Ascending aorta (tissue), 2 donors: ENCODE measurements at regions of chr15 and their contacts with region 1.

Region 1: DNA sequence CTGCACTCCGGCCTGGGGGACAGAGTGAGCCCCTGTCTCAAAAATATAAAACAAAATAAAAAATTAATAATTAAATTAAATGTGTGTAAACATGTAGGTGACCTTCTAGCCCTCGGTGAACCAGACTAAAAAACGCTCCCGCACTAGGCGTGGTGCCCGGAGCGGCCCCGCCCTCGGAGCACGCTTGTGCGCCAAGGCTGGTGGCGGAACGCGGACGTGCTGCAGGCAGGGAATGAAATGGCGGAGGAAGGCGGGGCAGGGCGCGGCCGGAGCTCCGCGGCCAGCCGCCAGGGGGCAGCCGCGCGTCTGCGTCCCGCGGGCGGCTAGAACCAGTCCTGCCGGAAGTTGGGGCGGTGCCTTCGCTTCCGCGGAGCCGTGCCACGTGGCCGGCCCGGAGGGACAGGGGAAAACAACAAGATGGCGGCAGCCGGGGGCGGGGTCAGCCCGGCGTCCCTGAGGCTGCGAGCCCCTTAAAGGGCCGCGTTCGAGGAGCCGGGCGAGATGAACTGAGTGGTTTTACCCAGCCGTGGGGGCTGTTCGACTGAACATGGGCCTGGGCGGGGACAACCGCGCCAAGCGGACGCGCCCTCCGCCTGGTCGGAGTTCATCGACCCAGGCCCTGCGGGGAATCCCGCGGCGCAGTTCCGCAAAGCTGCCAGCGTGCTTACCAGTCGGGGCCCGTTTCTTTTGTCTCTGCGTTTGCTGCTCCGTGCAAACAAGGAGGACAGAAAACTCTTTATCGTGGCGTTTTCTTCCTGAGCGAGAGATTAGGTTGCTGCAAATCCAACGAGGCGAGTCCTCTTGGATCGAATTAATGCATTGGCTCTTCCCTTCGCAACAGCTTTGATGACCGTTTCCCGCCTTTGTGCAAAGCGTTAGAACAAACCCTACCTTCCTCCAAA is 90.9 kb upstream of the CHD2 start:
- DNase-seq: peak; percentile 94 to 99
- H3K4me3 ChIP-seq: peak overlapping the region; percentile 69 to 72
- H3K27ac ChIP-seq: peak overlapping the region; percentile 91 to 98
- H3K4me1 ChIP-seq: peaks cover 3 to 34% of the 10 kb centered on the region in 2 donors
- H3K27me3 ChIP-seq: no peaks in the 10 kb centered on the region
- CTCF ChIP-seq: peak; percentile 85 to 100 (median 89)

Region 2: DNA sequence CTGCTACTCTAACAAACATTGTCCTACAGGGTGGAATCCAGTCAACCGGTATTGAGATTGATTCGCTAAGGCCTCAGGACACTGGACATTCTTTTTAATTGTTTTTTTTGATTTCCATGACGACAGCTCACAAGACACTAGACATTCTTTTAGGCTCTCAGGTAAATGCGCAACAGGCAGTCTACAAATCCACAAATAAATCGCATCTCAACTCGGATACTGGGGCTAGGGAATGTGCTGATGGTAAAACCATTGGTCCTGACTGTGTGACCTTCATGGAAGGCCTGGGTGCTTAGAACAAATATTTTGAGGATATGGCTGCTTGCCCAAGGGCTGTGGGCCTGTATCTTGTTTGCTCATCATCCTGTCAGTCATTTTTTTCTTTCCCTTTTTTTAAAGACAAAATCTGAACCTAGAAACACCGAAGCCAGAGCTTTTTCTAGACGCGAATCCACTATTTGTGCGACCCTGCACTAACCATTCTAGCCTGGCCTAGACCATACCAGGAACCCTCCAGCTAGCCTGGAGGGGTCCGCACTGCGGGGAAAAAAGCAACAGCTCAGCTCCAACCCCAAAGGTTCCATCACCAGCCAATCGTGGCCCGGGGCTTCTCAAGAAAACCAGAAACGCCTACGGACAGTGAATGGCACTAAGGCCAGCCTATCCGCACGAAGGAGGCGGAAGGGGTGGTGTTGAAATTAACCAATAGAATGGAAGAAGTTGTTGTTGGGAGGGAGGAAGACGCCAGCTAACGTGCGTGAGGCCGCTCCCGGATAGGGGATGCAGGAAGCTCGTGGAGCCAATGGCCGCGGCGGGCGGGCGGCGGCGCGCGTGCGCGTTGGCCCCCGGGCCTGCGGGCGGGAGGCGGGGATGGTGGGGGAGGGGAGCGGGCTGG is 72.8 kb after region 1 on chr15:
- intact Hi-C with region 1: loop called (anchors 1 kb)
- DNase-seq: peak; percentile 98 to 100
- H3K4me3 ChIP-seq: peak overlapping the region; percentile 94 to 99
- H3K27ac ChIP-seq: peak overlapping the region; percentile 88 to 100
- H3K4me1 ChIP-seq: peaks cover 0 to 14% of the 10 kb centered on the region in 2 donors
- H3K27me3 ChIP-seq: no peaks in the 10 kb centered on the region
- CTCF ChIP-seq: no peak

Region 3: DNA sequence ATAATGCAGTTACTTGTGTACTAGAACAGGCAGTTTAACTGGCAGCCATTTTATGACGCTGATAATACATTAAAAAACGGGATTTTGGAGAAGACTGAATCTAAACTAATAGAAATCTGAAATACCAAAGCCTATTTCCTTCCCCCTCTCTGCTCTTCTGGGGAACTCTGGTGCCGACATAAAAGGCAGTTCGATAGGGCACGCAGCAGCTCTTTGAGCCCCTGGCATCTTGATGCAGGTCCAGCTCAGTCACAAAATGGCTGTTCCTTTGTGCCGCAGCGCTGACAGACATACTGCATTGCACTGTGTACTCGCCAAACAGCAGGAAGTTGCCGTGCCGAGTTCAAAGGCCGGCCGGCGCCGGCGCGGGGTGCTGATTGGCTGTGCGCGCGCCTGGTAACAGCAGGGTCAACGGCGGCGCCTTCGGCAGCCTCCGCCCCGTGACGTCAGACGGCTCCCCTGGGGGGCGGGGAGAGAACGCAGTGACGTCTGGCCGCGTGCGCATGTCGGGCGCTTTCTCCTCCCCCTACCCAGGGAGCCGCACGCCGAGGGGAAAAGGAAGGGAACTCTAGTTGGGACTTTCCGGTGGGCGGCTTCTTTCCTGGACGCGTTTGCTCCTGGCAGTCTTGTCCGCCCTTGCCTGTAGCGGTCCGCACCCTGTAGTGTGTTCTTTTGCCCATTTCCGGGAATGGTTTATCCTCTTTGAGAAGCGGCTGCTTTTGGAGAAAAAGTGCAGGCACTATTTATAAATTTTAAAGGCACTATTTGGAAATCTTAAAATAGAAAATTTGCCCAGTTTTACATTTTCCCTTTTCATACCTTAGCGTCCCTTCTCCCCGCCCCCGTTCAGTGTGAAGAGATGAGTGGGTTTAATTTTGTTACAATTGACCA is 95.0 kb after region 1 on chr15:
- intact Hi-C with region 1: loop called (anchors 1 kb)
- DNase-seq: peak; percentile 98 to 99
- H3K4me3 ChIP-seq: peak overlapping the region; percentile 71 to 78
- H3K27ac ChIP-seq: peak overlapping the region; percentile 96 to 97
- H3K4me1 ChIP-seq: peaks cover 8 to 39% of the 10 kb centered on the region in 2 donors
- H3K27me3 ChIP-seq: no peaks in the 10 kb centered on the region
- CTCF ChIP-seq: no peak

Region 4: GRCh38 chr15:92938387-92938786 is 129.2 kb after region 1 on chr15:
- intact Hi-C with region 1: no loop called
- DNase-seq: no peak
- H3K4me3 ChIP-seq: no peak overlapping the region
- H3K27ac ChIP-seq: no peak overlapping the region
- H3K4me1 ChIP-seq: no peaks in the 10 kb centered on the region
- H3K27me3 ChIP-seq: no peaks in the 10 kb centered on the region
- CTCF ChIP-seq: peak in 1 of 3 experiments; percentile 11

Region 5: GRCh38 chr15:93451265-93451664 is 642.0 kb after region 1 on chr15:
- intact Hi-C with region 1: loop called (anchors 10 kb)
- DNase-seq: no peak
- H3K4me3 ChIP-seq: no peak overlapping the region
- H3K27ac ChIP-seq: no peak overlapping the region
- H3K4me1 ChIP-seq: peaks cover 0 to 10% of the 10 kb centered on the region in 2 donors
- H3K27me3 ChIP-seq: no peaks in the 10 kb centered on the region
- CTCF ChIP-seq: no peak